ENCODE measurements at regions of chr17 and their contacts with region 1.

Region 1: DNA sequence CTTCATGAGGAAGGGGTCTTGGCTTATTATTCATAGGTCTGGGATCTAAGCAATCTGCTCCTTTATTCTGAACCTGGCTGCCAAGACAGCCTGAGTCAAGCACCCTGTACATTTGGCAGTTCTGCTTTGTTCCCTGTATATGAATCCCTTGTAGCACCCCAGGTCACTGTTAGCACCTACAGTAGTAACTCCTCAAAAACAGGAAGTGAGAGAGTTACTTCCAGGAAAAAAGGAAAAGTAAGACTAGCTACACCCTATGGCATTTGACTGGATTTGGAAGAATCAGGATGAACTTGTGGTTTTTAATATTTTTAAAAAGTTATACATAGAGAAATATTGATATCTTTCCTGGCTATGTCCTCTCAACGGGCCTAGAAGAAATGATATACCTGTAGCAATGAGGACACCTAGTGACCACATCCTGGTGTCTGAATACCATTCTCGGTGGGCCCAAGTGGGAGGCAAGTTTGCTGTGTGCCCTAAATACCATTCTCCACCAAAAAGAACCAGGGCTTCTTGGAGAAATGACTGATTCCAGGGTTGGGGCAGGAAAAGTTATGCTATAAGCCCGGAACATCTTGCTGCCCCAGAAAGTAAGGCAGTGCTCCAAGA is 9.9 kb downstream of the ANKRD40 start:
- DNase-seq: no peak
- H3K4me3 ChIP-seq: no peak overlapping the region
- H3K27ac ChIP-seq: no peak overlapping the region
- H3K4me1 ChIP-seq: no peaks in the 10 kb centered on the region
- H3K27me3 ChIP-seq: no peaks in the 10 kb centered on the region

Region 2: DNA sequence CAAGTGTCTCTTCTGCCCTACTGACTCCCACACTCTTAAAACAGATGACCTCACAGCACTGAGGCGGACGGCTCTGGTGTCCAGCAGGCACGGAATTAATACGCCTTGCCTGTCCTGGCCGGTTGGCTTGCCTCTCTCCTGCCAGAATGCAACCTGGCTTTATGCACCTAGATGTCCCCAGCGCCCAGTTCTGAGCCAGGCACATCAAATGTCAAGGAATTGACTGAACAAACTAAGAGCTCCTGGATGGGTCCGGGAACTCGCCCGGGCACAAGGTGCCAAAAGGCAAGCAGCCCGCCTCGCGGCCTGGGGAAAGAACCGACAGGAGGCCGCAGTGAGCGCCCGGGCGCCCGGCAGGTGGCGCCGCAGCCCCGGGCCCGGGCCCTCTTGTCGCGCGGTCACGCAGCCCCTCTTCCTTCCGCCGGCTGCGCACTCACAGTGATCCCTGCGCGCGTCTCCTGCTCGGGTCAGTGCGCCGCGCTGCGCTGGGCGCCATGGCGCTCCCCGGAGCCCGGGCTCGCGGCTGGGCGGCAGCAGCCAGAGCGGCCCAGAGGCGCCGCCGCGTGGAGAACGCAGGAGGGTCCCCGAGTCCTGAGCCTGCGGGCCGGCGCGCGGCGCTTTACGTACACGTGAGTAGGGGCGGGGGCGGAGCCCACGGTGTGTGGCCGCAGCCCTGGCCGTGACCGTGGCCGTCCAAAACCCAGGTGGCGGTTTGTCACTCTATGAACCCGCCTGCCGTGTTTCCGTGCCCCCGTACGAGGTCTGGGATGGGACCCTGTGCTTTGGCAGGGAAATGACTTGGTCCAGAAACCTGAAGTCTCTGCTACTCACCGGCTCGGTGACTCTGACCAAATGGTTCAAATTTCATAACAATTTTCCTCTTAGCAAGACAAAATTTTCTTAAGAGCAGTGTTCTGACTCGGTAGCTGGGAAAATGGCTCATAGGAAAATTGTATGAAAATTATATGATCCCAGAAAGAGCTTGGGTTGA is 219.1 kb before region 1 on chr17 and contains the start of gene RSAD1:
- CTCF ChIA-PET with region 1: interaction called, 12 read pairs
- POLR2A ChIA-PET with region 1: no interaction called
- DNase-seq: peak; percentile 93 to 96 (median 95)
- H3K4me3 ChIP-seq: peak within 1 kb of the TSS; percentile 86 to 94 (median 90)
- H3K27ac ChIP-seq: peak within 1 kb of the TSS; percentile 7 to 85
- H3K4me1 ChIP-seq: peaks cover 0 to 21% (median 18%) of the 10 kb centered on the region in 4 experiments
- H3K27me3 ChIP-seq: peaks cover 0 to 4% (median 0%) of the 10 kb centered on the region in 5 experiments

Region 3: DNA sequence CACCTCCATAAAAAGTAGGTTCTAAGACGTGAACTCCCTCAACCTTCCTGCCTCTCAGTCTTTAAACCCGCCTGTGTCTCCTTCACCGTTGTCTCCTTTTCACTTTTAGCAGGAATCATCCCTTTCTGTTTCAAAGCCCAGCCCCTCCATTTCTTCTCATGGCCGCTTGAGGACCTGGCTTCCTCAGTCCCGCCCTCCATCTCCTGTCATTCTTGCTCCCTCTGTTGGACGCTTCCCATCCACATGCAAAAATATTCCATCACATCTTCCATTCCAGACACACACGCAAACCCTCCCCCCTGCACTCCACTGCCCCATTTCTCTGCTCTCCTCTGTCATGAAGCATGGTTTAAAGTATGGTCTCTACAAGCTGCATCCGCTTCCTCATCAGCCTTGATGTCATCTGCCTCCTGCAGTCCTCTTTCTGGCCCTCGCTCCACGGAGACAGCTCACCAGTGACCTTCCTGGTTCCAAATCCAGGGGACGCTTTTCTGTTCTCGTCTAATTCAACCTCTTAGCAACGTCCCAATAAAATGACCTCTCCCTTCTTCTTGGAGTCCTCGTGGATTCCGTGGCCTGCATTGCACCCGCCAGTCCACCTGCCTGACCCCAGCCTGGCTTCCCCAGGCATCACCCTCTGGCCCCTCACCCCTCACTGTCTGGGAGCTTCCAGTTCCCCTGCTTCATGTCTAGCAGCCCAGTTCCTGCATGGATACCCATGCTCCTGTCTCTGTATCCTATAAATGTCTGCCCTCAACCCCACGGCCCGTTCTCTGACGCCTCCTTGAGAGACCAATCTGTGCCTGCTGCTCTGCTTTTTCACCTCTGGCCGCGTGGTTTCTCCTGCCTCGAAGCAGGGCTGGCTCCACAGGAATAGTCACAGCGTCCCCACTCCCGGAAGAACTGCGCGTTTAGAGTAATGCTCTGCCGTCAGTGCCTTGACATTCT is 16.2 kb before region 1 on chr17:
- CTCF ChIA-PET with region 1: interaction called, 18 read pairs
- POLR2A ChIA-PET with region 1: no interaction called
- DNase-seq: peak; percentile 72 to 82 (median 80)
- H3K4me3 ChIP-seq: peak overlapping the region in 4 of 7 experiments; percentile 14 to 59 (median 42)
- H3K27ac ChIP-seq: no peak overlapping the region
- H3K4me1 ChIP-seq: peaks cover 0 to 7% (median 3%) of the 10 kb centered on the region in 4 experiments
- H3K27me3 ChIP-seq: peaks cover 0 to 9% (median 0%) of the 10 kb centered on the region in 5 experiments

Region 4: GRCh38 chr17:50686494-50687199 is 11.1 kb before region 1 on chr17:
- CTCF ChIA-PET with region 1: interaction called, 18 read pairs
- POLR2A ChIA-PET with region 1: no interaction called
- DNase-seq: no peak
- H3K4me3 ChIP-seq: no peak overlapping the region
- H3K27ac ChIP-seq: no peak overlapping the region
- H3K4me1 ChIP-seq: peaks cover 0 to 5% (median 0%) of the 10 kb centered on the region in 4 experiments
- H3K27me3 ChIP-seq: peaks cover 0 to 4% (median 0%) of the 10 kb centered on the region in 5 experiments

Region 5: DNA sequence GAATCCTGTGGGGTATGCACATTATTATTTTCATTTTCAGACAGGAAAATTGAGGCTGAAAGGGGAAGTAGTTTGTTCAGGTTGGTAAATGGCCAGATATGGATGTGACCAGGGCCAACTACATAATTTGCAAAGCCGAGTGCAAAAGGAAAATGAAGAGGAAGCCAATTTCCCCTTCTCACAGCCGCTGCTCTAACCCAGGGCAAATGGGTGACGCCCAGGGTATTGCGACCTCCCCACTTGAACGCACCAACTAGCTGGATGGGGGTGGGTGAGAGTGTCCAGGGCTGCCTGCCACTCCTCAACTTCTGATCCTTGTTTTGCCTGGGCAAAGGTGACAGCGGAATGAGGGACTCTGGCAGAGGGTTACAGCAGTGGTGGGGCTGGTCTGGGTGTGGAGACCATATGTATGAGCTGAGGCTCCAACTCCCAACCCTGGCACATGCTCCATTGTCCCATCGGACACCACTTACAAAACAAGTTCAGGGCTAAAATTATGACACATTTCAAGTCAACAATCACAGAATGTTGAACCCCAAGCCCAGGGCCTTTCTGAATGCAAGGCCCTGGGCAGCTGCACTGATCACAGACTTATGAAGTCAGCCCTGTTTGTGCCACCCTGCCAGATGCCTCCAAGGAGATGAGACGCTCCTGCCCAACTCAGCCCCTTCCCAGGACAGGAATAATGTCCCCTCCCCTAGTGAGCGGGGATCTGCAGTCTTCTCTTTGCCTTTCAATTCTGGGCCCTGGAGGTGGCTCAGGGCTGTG is 67.9 kb after region 1 on chr17:
- CTCF ChIA-PET with region 1: no interaction called
- POLR2A ChIA-PET with region 1: no interaction called
- DNase-seq: peak; percentile 17 to 78 (median 70)
- H3K4me3 ChIP-seq: peak overlapping the region in 3 of 7 experiments; percentile 16 to 57 (median 17)
- H3K27ac ChIP-seq: no peak overlapping the region
- H3K4me1 ChIP-seq: peaks cover 13 to 31% (median 27%) of the 10 kb centered on the region in 4 experiments
- H3K27me3 ChIP-seq: no peaks in the 10 kb centered on the region